CD4-positive, alpha-beta memory T cell (primary cell): ENCODE measurements at regions of chrX and their contacts with region 1.

Region 1: DNA sequence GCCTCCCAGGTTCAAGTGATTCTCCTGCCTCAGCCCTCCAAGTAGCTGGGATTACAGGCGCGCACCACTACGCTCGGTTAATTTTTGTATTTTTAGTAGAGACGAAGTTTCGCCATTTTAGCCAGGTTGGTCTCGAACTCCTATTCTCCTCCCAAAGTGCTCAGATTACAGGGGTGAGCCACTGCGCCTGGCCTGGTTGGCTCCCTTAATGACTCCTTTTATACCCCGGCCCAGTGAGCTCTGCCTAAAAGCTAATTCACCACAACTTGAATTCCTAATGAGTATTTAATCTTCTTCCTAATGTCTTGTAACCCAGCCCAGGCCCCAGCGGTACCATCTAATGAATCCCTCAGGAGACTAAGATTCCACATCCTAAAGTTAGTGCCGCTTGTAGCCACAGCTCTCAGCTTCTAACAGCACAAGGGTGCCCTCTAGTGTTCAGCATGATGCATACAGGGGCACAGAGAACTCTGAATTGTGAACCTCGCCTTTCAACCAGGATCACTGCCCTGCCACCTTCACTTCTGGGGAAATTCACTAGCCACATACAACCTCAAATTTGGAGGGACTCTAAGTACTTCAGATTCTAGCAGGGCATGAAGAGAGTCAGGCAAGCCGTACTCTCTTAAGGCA is 89.5 kb downstream of the OR13H1 start:
- DNase-seq: peak; percentile 37 to 48 (median 43)
- H3K4me3 ChIP-seq: no peak overlapping the region
- H3K4me3 Mint-ChIP-seq: no peak overlapping the region
- H3K27ac ChIP-seq: no peak overlapping the region
- H3K27ac Mint-ChIP-seq: no peak overlapping the region
- H3K4me1 ChIP-seq: no peaks in the 10 kb centered on the region
- H3K4me1 Mint-ChIP-seq: no peaks in the 10 kb centered on the region
- H3K27me3 ChIP-seq: no peaks in the 10 kb centered on the region
- H3K27me3 Mint-ChIP-seq: peaks cover 0 to under 1% of the 10 kb centered on the region in 2 donors

Region 2: GRCh38 chrX:131262737-131263679 is 370.4 kb before region 1 on chrX:
- CTCF ChIA-PET with region 1: no interaction called
- POLR2A ChIA-PET with region 1: no interaction called
- intact Hi-C with region 1: loop called (anchors 5 kb)
- DNase-seq: no peak
- H3K4me3 ChIP-seq: no peak overlapping the region
- H3K4me3 Mint-ChIP-seq: peak overlapping the region in 2 of 8 donors; percentile 30 to 63
- H3K27ac ChIP-seq: no peak overlapping the region
- H3K27ac Mint-ChIP-seq: peak overlapping the region in 1 of 7 donors; percentile 47
- H3K4me1 ChIP-seq: no peaks in the 10 kb centered on the region
- H3K4me1 Mint-ChIP-seq: peaks cover 0 to 8% (median under 1%) of the 10 kb centered on the region in 4 donors
- H3K27me3 ChIP-seq: no peaks in the 10 kb centered on the region
- H3K27me3 Mint-ChIP-seq: no peaks in the 10 kb centered on the region

Region 3: DNA sequence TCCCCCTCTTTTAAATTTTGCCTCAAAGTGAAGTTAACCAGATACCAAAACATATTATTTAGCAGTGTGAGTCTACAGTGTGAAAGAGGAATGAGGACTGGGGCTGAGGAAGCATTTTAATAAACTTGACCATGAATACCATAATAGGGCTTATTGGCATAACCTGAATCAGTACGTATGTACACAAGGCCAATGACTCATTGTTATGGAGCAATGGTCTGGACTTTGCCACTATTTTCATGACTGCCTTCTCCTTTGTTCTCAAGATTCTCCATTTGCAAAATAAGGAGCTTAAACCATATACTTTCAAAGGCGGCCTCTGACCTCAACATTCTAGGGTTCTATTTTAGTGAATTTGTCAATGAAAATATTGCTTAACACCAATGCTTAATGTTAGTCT is 192.4 kb before region 1 on chrX:
- CTCF ChIA-PET with region 1: no interaction called
- POLR2A ChIA-PET with region 1: no interaction called
- intact Hi-C with region 1: no loop called
- DNase-seq: no peak
- H3K4me3 ChIP-seq: no peak overlapping the region
- H3K4me3 Mint-ChIP-seq: no peak overlapping the region
- H3K27ac ChIP-seq: no peak overlapping the region
- H3K27ac Mint-ChIP-seq: no peak overlapping the region
- H3K4me1 ChIP-seq: no peaks in the 10 kb centered on the region
- H3K4me1 Mint-ChIP-seq: no peaks in the 10 kb centered on the region
- H3K27me3 ChIP-seq: no peaks in the 10 kb centered on the region
- H3K27me3 Mint-ChIP-seq: no peaks in the 10 kb centered on the region